Naive thymus-derived CD4-positive, alpha-beta T cell (primary cell): ENCODE measurements at regions of chr19 and their contacts with region 1.

Region 1: DNA sequence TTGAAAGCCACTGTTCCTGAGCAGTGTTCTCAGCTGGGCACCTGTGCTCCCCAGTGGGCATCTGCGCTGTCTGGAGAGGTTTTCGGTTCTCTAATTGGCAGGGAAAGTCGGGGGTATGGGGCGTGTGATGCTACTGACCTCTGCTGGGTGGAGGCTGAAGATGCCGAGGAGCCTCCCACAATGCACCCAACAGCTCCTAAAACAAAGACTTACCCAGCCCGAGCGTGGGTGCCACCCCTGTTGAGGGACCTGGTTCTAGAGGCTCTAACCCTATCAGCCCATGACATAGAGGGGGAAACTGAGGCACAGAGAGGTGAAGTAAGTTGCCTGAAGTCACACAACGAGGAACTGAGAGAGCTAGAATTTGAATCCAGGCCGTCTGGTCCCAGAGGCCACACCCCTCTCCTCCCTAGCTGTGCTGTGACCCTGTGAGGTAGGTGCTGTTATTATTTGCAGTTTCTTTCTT is 2.3 kb downstream of the SPACA4 start:
- DNase-seq: peak in 7 of 9 donors; percentile 32 to 61 (median 55)
- ATAC-seq: peak; percentile 92
- H3K4me3 ChIP-seq: no peak overlapping the region
- H3K4me3 Mint-ChIP-seq: peak overlapping the region in 6 of 10 donors; percentile 16 to 61 (median 40)
- H3K27ac ChIP-seq: no peak overlapping the region
- H3K27ac Mint-ChIP-seq: peak overlapping the region in 4 of 9 donors; percentile 32 to 56 (median 46)
- H3K4me1 ChIP-seq: peaks cover 3 to 4% of the 10 kb centered on the region in 2 donors
- H3K4me1 Mint-ChIP-seq: peaks cover 2 to 6% (median 5%) of the 10 kb centered on the region in 7 donors
- H3K27me3 ChIP-seq: no peaks in the 10 kb centered on the region
- H3K27me3 Mint-ChIP-seq: no peaks in the 10 kb centered on the region

Region 2: GRCh38 chr19:48308631-48309586 is 299.9 kb before region 1 on chr19:
- CTCF ChIA-PET with region 1: no interaction called
- POLR2A ChIA-PET with region 1: no interaction called
- intact Hi-C with region 1: loop called in 1 of 2 experiments (anchors 1 kb)
- DNase-seq: no peak
- ATAC-seq: no peak
- H3K4me3 ChIP-seq: no peak overlapping the region
- H3K4me3 Mint-ChIP-seq: no peak overlapping the region
- H3K27ac ChIP-seq: no peak overlapping the region
- H3K27ac Mint-ChIP-seq: no peak overlapping the region
- H3K4me1 ChIP-seq: no peaks in the 10 kb centered on the region
- H3K4me1 Mint-ChIP-seq: peaks cover 0 to 4% (median 0%) of the 10 kb centered on the region in 7 donors
- H3K27me3 ChIP-seq: no peaks in the 10 kb centered on the region
- H3K27me3 Mint-ChIP-seq: peaks cover 0 to 14% (median 0%) of the 10 kb centered on the region in 5 donors

Region 3: GRCh38 chr19:48351341-48351752 is 257.5 kb before region 1 on chr19:
- CTCF ChIA-PET with region 1: no interaction called
- POLR2A ChIA-PET with region 1: no interaction called
- intact Hi-C with region 1: loop called in 1 of 2 experiments (anchors 1 kb)
- DNase-seq: peak; percentile 49 to 81 (median 64)
- ATAC-seq: peak; percentile 82
- H3K4me3 ChIP-seq: no peak overlapping the region
- H3K4me3 Mint-ChIP-seq: peak overlapping the region in 1 of 10 donors; percentile 45
- H3K27ac ChIP-seq: no peak overlapping the region
- H3K27ac Mint-ChIP-seq: peak overlapping the region in 1 of 9 donors; percentile 5
- H3K4me1 ChIP-seq: no peaks in the 10 kb centered on the region
- H3K4me1 Mint-ChIP-seq: peaks cover 0 to 10% (median 3%) of the 10 kb centered on the region in 7 donors
- H3K27me3 ChIP-seq: no peaks in the 10 kb centered on the region
- H3K27me3 Mint-ChIP-seq: no peaks in the 10 kb centered on the region

Region 4: GRCh38 chr19:48501496-48502350 is 107.1 kb before region 1 on chr19:
- CTCF ChIA-PET with region 1: interaction called, 7 read pairs
- POLR2A ChIA-PET with region 1: interaction called, 3 read pairs
- intact Hi-C with region 1: loop called (anchors 1 kb)
- DNase-seq: peak in 8 of 9 donors; percentile 64 to 89 (median 79)
- ATAC-seq: peak; percentile 83
- H3K4me3 ChIP-seq: peak overlapping the region; percentile 37
- H3K4me3 Mint-ChIP-seq: peak overlapping the region; percentile 70 to 86 (median 80)
- H3K27ac ChIP-seq: peak overlapping the region; percentile 60
- H3K27ac Mint-ChIP-seq: peak overlapping the region; percentile 59 to 95 (median 84)
- H3K4me1 ChIP-seq: peaks cover 0 to 15% of the 10 kb centered on the region in 2 donors
- H3K4me1 Mint-ChIP-seq: peaks cover 0 to 29% (median 19%) of the 10 kb centered on the region in 7 donors
- H3K27me3 ChIP-seq: no peaks in the 10 kb centered on the region
- H3K27me3 Mint-ChIP-seq: peaks cover 0 to 9% (median 0%) of the 10 kb centered on the region in 5 donors

Region 5: DNA sequence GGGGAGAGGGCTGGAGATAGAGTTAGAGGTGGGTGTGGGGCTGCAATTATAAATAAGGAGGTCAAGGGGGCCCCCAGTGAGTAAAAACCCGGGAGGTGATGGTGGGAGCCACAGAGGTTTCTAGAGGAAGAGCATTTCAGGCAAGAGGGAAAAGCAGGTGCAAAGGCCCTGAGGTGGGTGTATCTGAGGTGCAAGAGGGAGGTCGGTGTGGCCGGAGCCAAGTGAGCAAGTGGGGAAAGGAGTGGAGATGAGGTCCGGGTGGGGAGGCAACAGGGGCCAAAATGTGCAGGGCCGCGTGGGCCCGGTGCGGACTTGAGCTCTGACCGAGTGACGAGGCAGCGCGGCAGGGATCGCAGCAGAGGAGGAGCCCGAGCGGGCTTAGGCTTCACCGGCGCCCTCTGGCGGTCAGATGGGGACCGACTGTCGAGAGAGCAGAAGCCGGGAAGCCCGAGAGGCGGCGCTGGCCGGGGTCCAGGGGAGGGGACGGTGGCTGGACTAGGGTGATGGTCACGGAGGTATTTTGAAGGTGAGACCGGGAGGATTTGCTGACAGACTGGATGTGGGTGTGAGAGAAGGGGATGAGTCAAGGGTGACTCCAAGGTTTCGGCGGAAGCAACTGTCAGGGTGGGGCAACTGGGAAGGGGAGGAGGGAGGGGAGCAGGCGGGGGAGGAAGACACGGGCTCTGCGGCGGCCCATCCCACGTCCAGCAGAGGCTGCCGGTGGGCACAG is 20.0 kb before region 1 on chr19:
- CTCF ChIA-PET with region 1: interaction called, 13 read pairs
- POLR2A ChIA-PET with region 1: interaction called, 5 read pairs
- intact Hi-C with region 1: loop called in 1 of 2 experiments (anchors 1 kb)
- DNase-seq: peak; percentile 65 to 92 (median 81)
- ATAC-seq: peak; percentile 92
- H3K4me3 ChIP-seq: no peak overlapping the region
- H3K4me3 Mint-ChIP-seq: peak overlapping the region; percentile 51 to 93 (median 78)
- H3K27ac ChIP-seq: no peak overlapping the region
- H3K27ac Mint-ChIP-seq: peak overlapping the region in 6 of 9 donors; percentile 37 to 86 (median 78)
- H3K4me1 ChIP-seq: peaks cover 0 to 3% of the 10 kb centered on the region in 2 donors
- H3K4me1 Mint-ChIP-seq: peaks cover 11 to 27% (median 15%) of the 10 kb centered on the region in 7 donors
- H3K27me3 ChIP-seq: no peaks in the 10 kb centered on the region
- H3K27me3 Mint-ChIP-seq: peaks cover 0 to 5% (median 0%) of the 10 kb centered on the region in 5 donors

Region 6: DNA sequence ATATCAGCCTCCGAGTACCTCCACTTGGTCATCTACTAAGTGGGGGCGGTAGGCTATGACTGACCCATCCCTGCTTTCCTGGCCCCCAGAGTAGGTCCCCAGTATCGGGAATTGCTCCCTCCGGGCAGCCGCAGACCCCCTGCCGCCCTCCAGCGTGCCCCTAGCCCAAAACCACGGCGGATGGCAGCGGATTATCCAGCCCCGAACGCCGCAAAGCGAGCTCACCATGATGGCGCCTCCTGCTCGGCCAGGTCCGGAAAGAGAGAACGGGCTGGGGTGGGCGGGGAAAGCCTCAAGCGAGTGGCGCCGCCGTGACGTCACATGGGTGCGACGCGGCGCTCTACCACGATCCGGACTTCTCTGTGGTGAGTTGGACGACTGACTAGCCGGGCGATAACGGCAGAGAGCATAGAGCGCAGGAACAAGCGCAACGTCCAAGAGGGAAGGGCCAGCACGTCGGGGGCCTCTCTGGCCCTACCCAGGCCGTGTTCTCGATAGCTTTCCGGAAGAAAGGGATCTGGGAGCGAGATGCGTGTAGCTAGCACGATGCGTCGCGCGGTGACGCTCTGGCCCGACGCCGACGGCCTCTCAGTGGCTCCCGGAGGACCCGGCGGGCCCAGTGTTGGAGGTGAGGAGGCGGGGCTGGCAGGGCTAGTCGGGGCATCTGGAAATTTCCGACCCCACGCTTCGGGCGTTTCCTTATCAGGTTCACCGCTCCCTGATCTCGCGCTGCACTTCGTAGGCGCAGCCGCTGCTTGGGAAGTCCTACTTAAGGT is 10.3 kb after region 1 on chr19 and contains the starts of genes RPL18 and SPHK2:
- CTCF ChIA-PET with region 1: interaction called, 5 read pairs
- POLR2A ChIA-PET with region 1: interaction called, 18 read pairs
- intact Hi-C with region 1: no loop called
- DNase-seq: peak; percentile 89 to 97 (median 95)
- ATAC-seq: peak; percentile 89
- H3K4me3 ChIP-seq: peak within 1 kb of the TSS; percentile 96
- H3K4me3 Mint-ChIP-seq: peak within 1 kb of the TSS; percentile 88 to 99 (median 96)
- H3K27ac ChIP-seq: peak within 1 kb of the TSS; percentile 95
- H3K27ac Mint-ChIP-seq: peak within 1 kb of the TSS; percentile 96 to 99 (median 98)
- H3K4me1 ChIP-seq: peaks cover 26 to 45% of the 10 kb centered on the region in 2 donors
- H3K4me1 Mint-ChIP-seq: peaks cover 40 to 64% (median 54%) of the 10 kb centered on the region in 7 donors
- H3K27me3 ChIP-seq: no peaks in the 10 kb centered on the region
- H3K27me3 Mint-ChIP-seq: no peaks in the 10 kb centered on the region
- total RNA-seq, gene RPL18: 1,570 to 2,826 (median 2,745) TPM
- total RNA-seq, gene SPHK2: 20.1 to 34.7 (median 30.5) TPM